Left colon (tissue), 2 donors: ENCODE measurements at regions of chrX and their contacts with region 1.

Region 1: GRCh38 chrX:11499076-11500044 is 166.4 kb downstream of the ARHGAP6 start:
- DNase-seq: no peak
- ATAC-seq: no peak

Region 2: GRCh38 chrX:11397680-11398079 is 101.7 kb before region 1 on chrX:
- intact Hi-C with region 1: no loop called
- DNase-seq: no peak
- ATAC-seq: no peak

Region 3: GRCh38 chrX:11465648-11466411 is 33.5 kb before region 1 on chrX:
- intact Hi-C with region 1: loop called in 1 of 2 experiments (anchors 2 kb)
- DNase-seq: no peak
- ATAC-seq: no peak